Breast epithelium (tissue), 4 donors: ENCODE measurements at regions of chr17 and their contacts with region 1.

Region 1: DNA sequence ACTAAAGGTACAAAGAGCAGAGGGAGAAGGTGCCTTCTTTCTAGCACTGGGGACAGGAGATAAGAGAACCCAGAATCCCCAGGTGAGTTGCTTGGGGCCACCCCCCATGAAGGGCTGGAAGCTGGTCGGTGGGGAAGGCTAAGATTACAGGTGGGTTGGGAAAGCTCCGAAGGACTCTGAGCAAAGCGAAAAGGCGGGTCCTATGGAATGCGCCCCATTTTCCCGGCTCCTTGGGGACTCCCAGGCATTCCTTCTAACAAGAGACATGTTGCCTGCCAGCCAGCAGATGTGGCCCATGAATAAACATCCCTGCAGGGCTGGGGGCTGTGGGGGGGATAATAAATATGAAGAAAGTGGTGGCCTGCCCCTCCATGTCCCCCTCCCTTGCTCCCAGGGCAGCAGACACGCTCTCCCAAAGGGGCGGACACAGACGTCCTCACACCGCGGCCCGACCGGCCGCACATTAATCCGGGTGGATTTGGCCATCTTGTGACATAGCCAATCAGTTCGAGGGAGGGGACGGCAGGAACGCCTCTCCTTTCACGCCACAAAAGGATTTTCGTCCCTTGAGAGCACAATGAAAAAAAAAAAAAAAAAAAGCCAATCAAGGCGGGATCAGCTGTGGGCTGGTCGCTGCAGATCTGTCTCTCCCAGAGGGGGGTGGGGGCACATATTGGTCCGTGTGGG is 98.5 kb downstream of the SOX9 start:
- DNase-seq: no peak
- H3K4me3 ChIP-seq: peak overlapping the region in 1 of 3 donors; percentile 46
- H3K27ac ChIP-seq: no peak overlapping the region
- H3K4me1 ChIP-seq: no peaks in the 10 kb centered on the region
- H3K27me3 ChIP-seq: peaks cover 0 to 17% of the 10 kb centered on the region in 2 donors
- CTCF ChIP-seq: no peak
- POLR2A ChIP-seq: no peak

Region 2: GRCh38 chr17:74152591-74153455 is 1933.5 kb after region 1 on chr17:
- intact Hi-C with region 1: loop called (anchors 5 kb)
- DNase-seq: no peak
- H3K4me3 ChIP-seq: no peak overlapping the region
- H3K27ac ChIP-seq: no peak overlapping the region
- H3K4me1 ChIP-seq: no peaks in the 10 kb centered on the region
- H3K27me3 ChIP-seq: no peaks in the 10 kb centered on the region
- CTCF ChIP-seq: no peak
- POLR2A ChIP-seq: no peak